ENCODE measurements at regions of chr14 and their contacts with region 1.

Region 1: GRCh38 chr14:102437997-102438915 is 71.3 kb downstream of the ANKRD9 start:
- DNase-seq: peak; percentile 82
- H3K4me3 Mint-ChIP-seq: no peak overlapping the region
- H3K27ac Mint-ChIP-seq: no peak overlapping the region
- H3K4me1 Mint-ChIP-seq: no peaks in the 10 kb centered on the region
- H3K27me3 Mint-ChIP-seq: no peaks in the 10 kb centered on the region
- CTCF ChIP-seq: peak; percentile 69

Region 2: DNA sequence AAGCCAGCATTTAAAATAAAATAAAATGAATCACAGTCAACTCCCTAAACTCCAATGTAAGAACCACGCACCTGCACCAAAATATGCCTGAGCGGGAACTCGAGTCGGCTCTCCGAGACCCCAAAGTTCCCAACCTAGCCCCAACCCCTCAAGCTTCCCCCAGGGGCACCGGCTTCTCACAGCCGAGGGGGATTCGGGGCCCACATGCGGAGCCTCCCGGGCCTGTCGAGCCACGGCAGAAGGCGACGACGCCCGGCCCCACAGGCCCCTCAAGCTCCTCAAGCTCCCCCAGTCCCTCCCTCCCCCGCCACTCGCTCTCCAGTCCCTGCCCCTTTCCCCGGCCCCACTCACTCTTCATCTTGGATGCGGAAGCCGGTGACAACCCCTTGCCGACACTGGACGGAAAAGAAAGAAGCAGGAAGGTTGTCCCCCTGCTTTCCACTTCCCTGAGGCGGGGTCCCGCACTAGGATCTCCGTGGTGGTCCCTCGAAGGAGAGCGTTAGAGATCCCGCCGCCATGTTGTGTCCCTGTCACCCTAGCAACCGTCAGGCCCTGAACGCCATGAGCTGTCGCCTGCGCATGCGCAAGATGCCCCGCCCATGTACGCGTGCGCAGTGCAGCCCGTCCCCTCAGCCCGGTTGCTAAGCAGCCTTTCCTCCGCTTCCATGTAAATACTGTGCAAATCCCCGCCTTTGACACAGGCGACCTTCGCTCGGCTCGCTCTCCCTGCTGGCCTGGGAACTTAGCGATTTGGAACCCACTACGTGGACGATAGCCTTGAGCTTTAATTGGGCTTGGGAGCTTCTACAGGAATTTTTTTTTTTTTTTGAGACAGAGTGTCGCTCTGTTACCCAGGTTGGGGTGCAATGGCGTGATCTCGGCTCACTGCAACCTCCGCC is 133.4 kb before region 1 on chr14 and contains the start of gene MOK:
- CTCF ChIA-PET with region 1: no interaction called
- POLR2A ChIA-PET with region 1: no interaction called
- intact Hi-C with region 1: no loop called
- DNase-seq: peak; percentile 96
- H3K4me3 Mint-ChIP-seq: peak within 1 kb of the TSS; percentile 87
- H3K27ac Mint-ChIP-seq: peak within 1 kb of the TSS; percentile 99
- H3K4me1 Mint-ChIP-seq: peaks cover 7% of the 10 kb centered on the region
- H3K27me3 Mint-ChIP-seq: no peaks in the 10 kb centered on the region
- CTCF ChIP-seq: no peak
- total RNA-seq, gene MOK: 61.7 and 98.9 TPM in 2 replicates

Region 3: DNA sequence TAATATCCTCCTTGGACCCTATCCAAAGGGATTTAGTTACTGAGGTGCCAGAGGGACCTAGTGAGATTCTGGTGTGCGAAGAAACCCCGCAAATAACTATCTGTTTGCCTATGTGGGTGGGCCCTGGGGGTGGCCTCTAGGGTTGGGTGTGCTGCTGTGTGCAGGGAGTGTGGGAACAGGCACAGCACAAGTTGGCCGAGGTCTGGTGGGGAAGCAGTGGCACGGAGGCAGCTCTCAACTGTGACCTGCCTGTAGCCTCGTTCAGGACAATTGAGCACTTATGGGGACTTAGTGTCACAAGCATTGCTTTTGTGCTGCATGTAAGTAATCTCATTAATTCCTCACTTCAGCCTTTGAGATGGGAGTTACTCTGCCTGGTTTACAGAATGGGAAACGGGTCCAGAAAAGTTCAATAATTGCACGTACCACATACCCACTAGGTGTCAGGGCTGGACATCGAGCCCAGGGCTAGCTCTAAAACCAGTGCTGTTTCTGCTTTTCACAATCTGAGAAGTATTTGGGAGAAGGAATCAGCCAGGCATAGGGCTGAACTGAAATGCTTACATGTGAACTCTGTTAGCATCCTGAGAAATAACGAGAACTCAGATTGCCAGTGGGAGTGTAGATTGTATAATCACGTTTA is 16.7 kb before region 1 on chr14:
- CTCF ChIA-PET with region 1: interaction called, 12 read pairs
- POLR2A ChIA-PET with region 1: interaction called, 3 read pairs
- intact Hi-C with region 1: no loop called
- DNase-seq: no peak
- H3K4me3 Mint-ChIP-seq: no peak overlapping the region
- H3K27ac Mint-ChIP-seq: no peak overlapping the region
- H3K4me1 Mint-ChIP-seq: no peaks in the 10 kb centered on the region
- H3K27me3 Mint-ChIP-seq: no peaks in the 10 kb centered on the region
- CTCF ChIP-seq: no peak

Region 4: GRCh38 chr14:102450206-102451060 is 12.2 kb after region 1 on chr14:
- CTCF ChIA-PET with region 1: interaction called, 16 read pairs
- POLR2A ChIA-PET with region 1: interaction called, 3 read pairs
- intact Hi-C with region 1: no loop called
- DNase-seq: no peak
- H3K4me3 Mint-ChIP-seq: no peak overlapping the region
- H3K27ac Mint-ChIP-seq: no peak overlapping the region
- H3K4me1 Mint-ChIP-seq: no peaks in the 10 kb centered on the region
- H3K27me3 Mint-ChIP-seq: no peaks in the 10 kb centered on the region
- CTCF ChIP-seq: no peak

Region 5: DNA sequence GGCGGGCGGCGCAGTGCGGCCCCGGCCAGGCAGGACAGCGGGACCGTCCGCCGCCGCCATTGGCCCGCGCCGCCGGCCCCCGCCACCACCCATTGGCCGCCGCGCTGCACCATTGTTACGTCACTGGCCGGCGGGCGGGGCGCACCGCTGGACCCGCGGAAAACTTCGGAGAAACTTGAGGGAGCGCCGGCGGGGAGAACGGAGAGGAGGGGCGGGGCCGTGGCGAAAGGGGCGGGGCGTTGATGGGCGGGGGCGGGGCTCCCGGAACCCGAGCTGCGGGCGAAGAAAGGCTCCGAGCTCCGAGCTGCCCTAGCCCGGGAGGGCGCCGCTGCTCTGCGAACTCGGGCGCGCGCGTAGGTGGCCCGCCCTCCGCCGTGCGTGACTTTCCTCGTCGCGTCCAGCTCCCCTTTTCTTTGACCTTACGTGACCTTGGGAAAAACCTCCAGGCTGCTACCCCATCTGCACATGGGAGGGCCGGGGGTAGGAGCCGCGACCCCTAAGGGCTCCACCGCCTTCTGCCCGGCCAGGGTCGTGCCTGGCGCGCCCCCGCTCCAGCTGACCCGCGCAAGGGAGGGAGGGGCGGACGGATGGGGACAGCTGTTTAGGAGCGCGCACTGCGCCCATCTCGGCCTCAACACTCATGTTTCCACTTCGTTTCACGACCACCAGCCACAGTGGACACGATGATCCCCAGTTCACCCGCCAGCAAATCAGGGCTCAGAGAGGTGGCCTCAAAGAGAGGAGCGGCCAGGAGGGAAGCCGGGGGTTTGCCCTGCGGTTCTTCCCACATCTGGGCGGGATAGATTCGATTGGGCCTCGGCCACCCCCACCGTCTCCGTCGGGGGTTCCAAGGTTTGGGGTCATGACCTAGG is 71.7 kb after region 1 on chr14 and contains the start of gene ANKRD9:
- CTCF ChIA-PET with region 1: interaction called, 53 read pairs
- POLR2A ChIA-PET with region 1: interaction called, 3 read pairs
- intact Hi-C with region 1: no loop called
- DNase-seq: peak; percentile 94
- H3K4me3 Mint-ChIP-seq: peak within 1 kb of the TSS; percentile 72
- H3K27ac Mint-ChIP-seq: no peak within 1 kb of the TSS
- H3K4me1 Mint-ChIP-seq: no peaks in the 10 kb centered on the region
- H3K27me3 Mint-ChIP-seq: no peaks in the 10 kb centered on the region
- CTCF ChIP-seq: no peak
- total RNA-seq, gene ANKRD9: 8.4 and 10.2 TPM in 2 replicates

Region 6: GRCh38 chr14:102516531-102517415 is 78.5 kb after region 1 on chr14:
- CTCF ChIA-PET with region 1: interaction called, 53 read pairs
- POLR2A ChIA-PET with region 1: interaction called, 3 read pairs
- intact Hi-C with region 1: loop called (anchors 1 kb)
- DNase-seq: peak; percentile 23
- H3K4me3 Mint-ChIP-seq: peak overlapping the region; percentile 76
- H3K27ac Mint-ChIP-seq: peak overlapping the region; percentile 63
- H3K4me1 Mint-ChIP-seq: peaks cover 5% of the 10 kb centered on the region
- H3K27me3 Mint-ChIP-seq: no peaks in the 10 kb centered on the region
- CTCF ChIP-seq: peak; percentile 95

Region 7: DNA sequence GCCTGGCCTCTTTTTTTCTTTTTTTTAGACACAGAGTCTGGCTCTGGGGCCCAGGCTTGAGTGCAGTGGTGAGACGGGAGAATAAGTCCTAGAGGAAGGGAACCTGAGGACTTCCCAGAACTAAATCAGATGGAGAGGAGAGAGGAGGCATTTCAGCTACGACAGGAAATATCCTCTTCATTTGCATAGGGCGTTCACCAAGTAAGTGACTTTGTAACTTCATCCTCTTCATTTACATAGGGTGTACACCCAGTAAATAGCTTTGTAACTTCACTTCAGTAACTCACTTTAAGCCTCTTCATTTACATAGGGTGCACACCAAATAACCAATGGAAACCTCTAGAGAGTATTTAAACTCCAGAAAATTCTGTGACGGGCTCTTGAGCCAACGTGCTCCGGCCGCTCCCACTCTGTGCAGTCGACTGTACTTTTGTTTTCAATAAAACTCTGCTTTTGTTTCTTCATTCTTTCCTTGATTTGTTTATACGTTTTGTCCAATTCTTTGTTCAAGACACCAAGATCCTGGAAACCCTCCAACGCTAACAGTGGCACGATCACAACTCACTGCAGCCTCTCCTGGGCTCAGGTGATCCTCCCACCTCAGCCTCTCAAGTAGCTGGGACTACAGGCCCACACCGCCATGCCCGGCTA is 92.7 kb after region 1 on chr14:
- CTCF ChIA-PET with region 1: no interaction called
- POLR2A ChIA-PET with region 1: no interaction called
- intact Hi-C with region 1: no loop called
- DNase-seq: peak; percentile 83
- H3K4me3 Mint-ChIP-seq: no peak overlapping the region
- H3K27ac Mint-ChIP-seq: no peak overlapping the region
- H3K4me1 Mint-ChIP-seq: peaks cover 18% of the 10 kb centered on the region
- H3K27me3 Mint-ChIP-seq: no peaks in the 10 kb centered on the region
- CTCF ChIP-seq: no peak

Measured in MCF 10A (cell line).